Dendritic cell treated with granulocyte-macrophage colony-stimulating factor and Interleukin-4, amounts not matched to agents 40 ng/mL and 50 ng/mL, for 4 days (primary cell): ENCODE measurements at regions of chr11 and their contacts with region 1.

Region 1: DNA sequence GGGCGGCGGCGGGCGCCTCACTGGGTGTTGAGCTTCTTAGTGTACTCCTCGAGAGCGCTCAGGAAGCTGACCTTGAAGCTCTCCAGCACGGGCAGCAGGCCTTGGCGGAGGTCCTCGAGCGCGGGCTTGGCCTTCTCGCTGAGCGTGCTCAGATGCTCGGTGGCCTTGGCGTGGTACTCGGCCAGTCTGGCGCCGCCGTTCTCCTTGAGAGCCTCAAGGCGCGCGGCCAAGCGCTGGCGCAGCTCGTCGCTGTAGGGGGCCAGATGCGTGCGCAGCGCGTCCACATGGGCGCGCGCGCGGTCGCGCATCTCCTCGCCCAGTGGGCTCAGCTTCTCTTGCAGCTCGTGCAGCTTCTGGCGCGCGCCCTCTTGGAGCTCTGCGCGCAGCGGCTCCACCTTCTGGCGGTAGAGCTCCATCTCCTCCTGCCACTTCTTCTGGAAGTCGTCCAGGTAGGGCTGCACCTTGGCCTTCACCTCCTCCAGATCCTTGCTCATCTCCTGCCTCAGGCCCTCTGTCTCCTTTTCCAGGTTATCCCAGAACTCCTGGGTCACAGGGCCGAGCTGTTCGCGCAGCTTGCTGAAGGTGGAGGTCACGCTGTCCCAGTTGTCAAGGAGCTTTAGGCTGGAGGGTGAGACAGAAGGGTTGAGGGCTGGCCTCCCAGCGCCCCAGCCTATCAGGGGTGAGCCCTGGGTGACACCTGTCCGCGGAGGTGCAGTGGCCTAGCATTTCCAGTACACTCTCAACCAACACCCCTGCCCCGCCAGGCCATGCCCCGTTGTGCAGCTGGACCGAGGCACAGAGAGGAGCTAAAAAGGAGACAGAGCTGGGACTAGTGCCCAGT is 1.4 kb downstream of the APOA1 start:
- H3K4me3 Mint-ChIP-seq: peak overlapping the region; percentile 68
- H3K27ac Mint-ChIP-seq: peak overlapping the region; percentile 75
- H3K4me1 Mint-ChIP-seq: peaks cover 24% of the 10 kb centered on the region
- H3K27me3 Mint-ChIP-seq: peaks cover 9% of the 10 kb centered on the region

Region 2: DNA sequence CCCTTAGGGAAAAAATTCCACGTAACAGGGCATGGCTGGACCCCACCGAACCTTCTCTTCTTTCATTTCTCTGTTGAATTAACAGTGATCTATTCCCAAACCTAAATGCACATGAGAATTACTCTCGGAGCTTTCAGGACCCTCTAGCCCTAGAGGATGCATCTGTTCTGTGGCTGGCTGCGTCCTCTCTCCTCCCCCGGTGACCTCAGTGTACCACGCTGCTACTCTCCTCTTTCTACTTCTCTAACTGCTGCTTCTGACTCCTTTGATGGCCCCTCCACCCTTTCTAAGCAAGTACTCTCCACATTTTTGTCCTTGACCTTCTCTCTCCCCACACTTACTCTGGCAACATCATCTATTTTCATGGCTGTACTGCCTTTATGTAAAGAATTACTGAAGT is 13.5 kb after region 1 on chr11:
- intact Hi-C with region 1: loop called (anchors 1 kb)
- H3K4me3 Mint-ChIP-seq: no peak overlapping the region
- H3K27ac Mint-ChIP-seq: peak overlapping the region; percentile 88
- H3K4me1 Mint-ChIP-seq: peaks cover 49% of the 10 kb centered on the region
- H3K27me3 Mint-ChIP-seq: no peaks in the 10 kb centered on the region